PC-9 (cell line): ENCODE measurements at regions of chr3 and their contacts with region 1.

Region 1: GRCh38 chr3:186108941-186109865 is at the start of gene ETV5:
- DNase-seq: peak; percentile 100
- H3K4me3 ChIP-seq: peak within 1 kb of the TSS; percentile 87
- H3K27ac ChIP-seq: peak within 1 kb of the TSS; percentile 80
- H3K4me1 ChIP-seq: peaks cover 40% of the 10 kb centered on the region
- H3K27me3 ChIP-seq: no peaks in the 10 kb centered on the region
- CTCF ChIP-seq: no peak
- total RNA-seq, gene ETV5: 39.3 and 65.7 TPM in 2 replicates

Region 2: DNA sequence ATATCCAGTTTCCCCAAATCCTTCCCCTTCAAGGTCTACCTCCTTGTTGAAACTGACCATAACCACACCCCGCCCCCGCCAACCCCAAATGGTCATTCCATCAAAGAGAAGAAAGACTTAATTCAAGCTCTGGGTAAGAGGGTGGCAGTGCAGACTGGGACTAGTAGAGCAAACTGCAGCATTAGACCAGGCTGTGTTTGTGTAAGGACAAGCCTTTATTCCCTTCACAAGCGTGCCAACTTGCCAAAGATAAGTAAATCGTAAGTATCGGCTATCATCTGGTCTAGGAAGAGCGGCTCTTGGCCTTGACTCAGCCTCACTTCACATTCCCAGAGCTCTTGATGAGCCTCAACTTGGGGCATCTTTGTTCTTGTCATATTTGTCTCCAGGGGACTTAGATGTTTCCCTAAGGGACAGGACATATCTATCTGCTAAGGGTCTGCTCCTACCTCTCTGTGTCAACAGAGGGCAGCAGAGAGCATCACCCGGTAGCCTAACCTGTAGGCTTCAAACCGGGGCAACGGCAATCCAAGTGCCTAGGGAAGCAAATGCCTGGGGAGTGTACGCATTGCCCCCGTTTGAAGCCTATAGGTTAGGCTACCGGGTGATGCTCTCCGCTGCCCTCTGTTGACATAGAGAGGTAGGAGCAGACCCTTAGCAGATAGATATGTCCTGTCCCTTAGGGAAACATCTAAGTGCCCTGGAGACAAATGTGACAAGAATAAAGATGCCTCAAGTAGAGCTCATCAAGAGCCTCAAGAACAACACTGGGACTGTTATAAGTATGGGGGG is 755.2 kb before region 1 on chr3:
- CTCF ChIA-PET with region 1: no interaction called
- POLR2A ChIA-PET with region 1: no interaction called
- intact Hi-C with region 1: no loop called
- DNase-seq: peak; percentile 78 to 82
- H3K4me3 ChIP-seq: no peak overlapping the region
- H3K27ac ChIP-seq: no peak overlapping the region
- H3K4me1 ChIP-seq: no peaks in the 10 kb centered on the region
- H3K27me3 ChIP-seq: no peaks in the 10 kb centered on the region
- CTCF ChIP-seq: peak; percentile 92

Region 3: DNA sequence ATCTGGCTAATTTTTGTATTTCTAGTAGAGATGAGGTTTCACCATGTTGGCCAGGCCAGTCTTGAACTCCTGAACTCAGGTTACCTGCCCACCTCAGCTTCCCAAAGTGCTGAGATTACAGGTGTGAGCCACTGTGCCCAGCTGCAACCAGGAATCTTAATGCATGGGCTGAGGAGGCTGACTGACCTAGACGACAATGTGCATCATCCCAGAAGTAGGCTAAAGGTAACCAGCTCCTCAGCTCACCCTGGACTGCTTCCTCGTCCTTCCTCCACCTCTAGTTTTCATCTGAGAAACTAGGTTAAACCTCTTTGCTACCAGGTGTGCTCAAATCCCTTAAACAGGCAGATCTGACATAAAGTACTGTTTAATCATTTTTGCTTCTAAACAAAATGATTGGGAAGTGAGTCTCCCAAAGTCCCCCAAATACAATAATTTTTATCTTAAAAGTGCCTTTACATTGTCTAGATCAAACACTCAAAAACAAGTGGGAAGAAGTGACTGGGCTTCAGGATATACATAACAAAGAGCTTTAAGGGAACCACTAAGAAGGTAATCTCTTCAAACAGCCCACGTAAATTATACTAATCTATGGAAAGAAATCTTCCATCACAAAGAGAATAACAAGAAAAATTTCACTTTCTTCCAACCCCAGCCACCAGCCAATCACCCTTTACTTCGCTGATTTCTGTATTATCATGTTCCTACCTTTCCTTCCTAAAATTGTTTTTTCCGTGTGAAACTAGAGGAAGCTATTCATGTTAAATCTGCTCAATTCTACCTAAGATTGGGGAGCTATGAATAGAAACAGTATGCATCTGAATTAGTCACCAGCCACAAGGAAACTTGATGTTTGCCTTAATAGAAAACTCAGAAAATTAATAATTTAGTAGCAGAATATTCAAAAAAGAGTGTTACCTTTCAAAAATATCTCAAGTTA is 319.0 kb before region 1 on chr3:
- CTCF ChIA-PET with region 1: interaction called, 10 read pairs
- POLR2A ChIA-PET with region 1: no interaction called
- intact Hi-C with region 1: no loop called
- DNase-seq: peak; percentile 46 to 76
- H3K4me3 ChIP-seq: peak overlapping the region; percentile 1; the same call in 1 of the 2 replicates
- H3K27ac ChIP-seq: peak overlapping the region; percentile 59
- H3K4me1 ChIP-seq: peaks cover 69% of the 10 kb centered on the region
- H3K27me3 ChIP-seq: no peaks in the 10 kb centered on the region
- CTCF ChIP-seq: no peak

Region 4: GRCh38 chr3:186021673-186022362 is 87.4 kb before region 1 on chr3:
- CTCF ChIA-PET with region 1: no interaction called
- POLR2A ChIA-PET with region 1: interaction called, 14 read pairs
- intact Hi-C with region 1: no loop called
- DNase-seq: peak; percentile 11 to 62
- H3K4me3 ChIP-seq: no peak overlapping the region
- H3K27ac ChIP-seq: no peak overlapping the region
- H3K4me1 ChIP-seq: no peaks in the 10 kb centered on the region
- H3K27me3 ChIP-seq: no peaks in the 10 kb centered on the region; the same call in 1 of the 2 replicates
- CTCF ChIP-seq: no peak

Region 5: DNA sequence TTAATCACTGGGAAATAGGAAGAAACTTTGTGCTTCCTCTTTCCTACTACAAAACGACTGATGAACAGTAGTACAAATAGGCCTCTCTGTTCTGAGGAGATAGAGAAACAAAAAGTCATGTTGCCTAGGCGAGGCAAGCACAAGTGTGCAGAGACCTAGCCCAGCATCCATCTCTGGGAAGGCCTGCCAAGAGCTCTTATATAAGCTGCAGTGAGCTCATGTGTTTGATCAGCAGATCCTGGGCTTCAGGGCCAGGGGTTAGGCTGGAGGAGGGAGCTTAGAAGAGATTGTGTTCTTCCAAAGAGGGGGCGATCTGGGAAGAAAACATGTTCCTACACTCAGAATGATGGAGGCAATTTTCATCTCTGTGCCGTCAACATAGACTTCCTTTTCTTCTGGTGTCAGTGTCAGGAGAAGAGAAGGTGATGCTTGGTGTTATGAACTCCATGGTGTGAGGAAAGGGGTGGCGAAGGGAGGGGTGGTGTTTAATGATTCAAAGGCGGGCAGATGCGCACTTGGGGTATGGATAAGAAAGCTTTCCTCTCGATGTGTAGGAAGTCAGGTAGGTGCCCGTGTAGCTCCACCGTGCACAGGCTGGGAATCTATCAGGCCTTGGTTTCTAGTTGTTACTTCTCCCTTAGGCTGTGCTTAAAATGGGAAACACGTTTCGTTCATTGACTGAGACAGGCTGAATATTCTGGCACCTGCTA is 29.2 kb after region 1 on chr3:
- CTCF ChIA-PET with region 1: no interaction called
- POLR2A ChIA-PET with region 1: interaction called, 12 read pairs
- intact Hi-C with region 1: no loop called
- DNase-seq: no peak
- H3K4me3 ChIP-seq: no peak overlapping the region
- H3K27ac ChIP-seq: no peak overlapping the region
- H3K4me1 ChIP-seq: no peaks in the 10 kb centered on the region
- H3K27me3 ChIP-seq: no peaks in the 10 kb centered on the region
- CTCF ChIP-seq: no peak

Region 6: DNA sequence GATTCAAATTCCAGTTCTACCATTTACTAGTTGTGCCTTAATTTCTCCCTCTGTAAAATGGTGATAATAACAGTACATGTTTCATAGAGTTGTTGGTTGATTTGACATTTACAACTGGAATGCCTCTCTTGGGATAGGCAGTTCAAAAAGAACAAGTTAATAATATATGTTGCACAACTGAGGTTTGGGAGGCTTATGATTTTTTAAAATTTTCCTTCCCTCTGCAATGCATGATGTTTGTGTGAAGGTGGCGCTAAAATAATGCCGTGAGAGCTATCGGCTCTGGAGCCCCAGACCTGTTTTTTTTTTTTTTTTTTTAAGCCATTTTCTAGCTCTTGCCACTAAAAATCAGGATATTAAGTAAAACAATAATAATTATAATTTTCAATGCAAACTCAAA is 479.9 kb after region 1 on chr3:
- CTCF ChIA-PET with region 1: no interaction called
- POLR2A ChIA-PET with region 1: no interaction called
- intact Hi-C with region 1: loop called (anchors 1 kb)
- DNase-seq: peak; percentile 18 to 62
- H3K4me3 ChIP-seq: peak overlapping the region; percentile 38; the same call in 1 of the 2 replicates
- H3K27ac ChIP-seq: peak overlapping the region; percentile 87
- H3K4me1 ChIP-seq: peaks cover 40% of the 10 kb centered on the region
- H3K27me3 ChIP-seq: no peaks in the 10 kb centered on the region
- CTCF ChIP-seq: peak; percentile 40; the same call in 1 of the 2 replicates